Naive thymus-derived CD4-positive, alpha-beta T cell (primary cell): ENCODE measurements at regions of chrX and their contacts with region 1.

Region 1: DNA sequence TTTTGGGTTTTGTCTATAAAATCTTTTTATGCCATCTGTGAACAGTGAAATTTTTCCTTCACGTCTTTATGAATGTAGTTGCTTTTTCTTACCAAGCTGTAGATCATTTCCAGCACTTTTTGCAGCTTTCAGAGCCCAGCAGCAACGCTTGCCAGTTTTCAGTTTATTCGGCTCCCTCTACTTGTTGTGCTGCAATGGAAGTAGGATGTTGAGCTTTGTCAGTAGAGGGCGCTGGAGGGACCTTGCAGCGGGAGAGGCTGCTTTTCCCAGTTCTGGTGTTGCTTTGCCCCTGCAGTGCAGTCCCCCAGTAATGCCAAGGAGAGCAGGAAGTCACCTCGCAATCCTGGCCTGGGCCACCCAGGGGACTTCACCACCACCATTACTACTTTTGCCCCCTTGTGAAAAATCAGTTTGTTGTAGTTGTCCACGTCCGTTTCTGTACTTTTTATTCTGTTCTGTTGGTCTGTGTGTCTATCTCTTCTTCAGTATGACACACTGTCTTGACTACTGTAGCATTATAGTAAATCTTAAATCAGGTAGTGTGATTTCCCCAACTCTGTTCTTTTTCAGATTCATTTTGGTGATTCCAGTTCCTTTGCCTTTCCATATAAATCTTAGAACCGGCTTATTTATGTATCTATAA is 21.8 kb downstream of the CMC4 start:
- DNase-seq: peak in 7 of 9 donors; percentile 28 to 59 (median 52)
- ATAC-seq: peak; percentile 66
- H3K4me3 ChIP-seq: no peak overlapping the region
- H3K4me3 Mint-ChIP-seq: peak overlapping the region in 4 of 10 donors; percentile 4 to 31 (median 11)
- H3K27ac ChIP-seq: peak overlapping the region; percentile 48
- H3K27ac Mint-ChIP-seq: peak overlapping the region in 8 of 9 donors; percentile 41 to 91 (median 78)
- H3K4me1 ChIP-seq: no peaks in the 10 kb centered on the region
- H3K4me1 Mint-ChIP-seq: peaks cover 7 to 63% (median 42%) of the 10 kb centered on the region in 7 donors
- H3K27me3 ChIP-seq: no peaks in the 10 kb centered on the region
- H3K27me3 Mint-ChIP-seq: no peaks in the 10 kb centered on the region

Region 2: GRCh38 chrX:153319295-153320046 is 1729.6 kb before region 1 on chrX:
- CTCF ChIA-PET with region 1: no interaction called
- POLR2A ChIA-PET with region 1: no interaction called
- intact Hi-C with region 1: no loop called
- DNase-seq: no peak
- ATAC-seq: no peak
- H3K4me3 ChIP-seq: no peak overlapping the region
- H3K4me3 Mint-ChIP-seq: no peak overlapping the region
- H3K27ac ChIP-seq: no peak overlapping the region
- H3K27ac Mint-ChIP-seq: no peak overlapping the region
- H3K4me1 ChIP-seq: peaks cover 0 to 7% of the 10 kb centered on the region in 2 donors
- H3K4me1 Mint-ChIP-seq: peaks cover 0 to 10% (median 8%) of the 10 kb centered on the region in 7 donors
- H3K27me3 ChIP-seq: no peaks in the 10 kb centered on the region
- H3K27me3 Mint-ChIP-seq: peaks cover 0 to 26% (median 0%) of the 10 kb centered on the region in 5 donors

Region 3: DNA sequence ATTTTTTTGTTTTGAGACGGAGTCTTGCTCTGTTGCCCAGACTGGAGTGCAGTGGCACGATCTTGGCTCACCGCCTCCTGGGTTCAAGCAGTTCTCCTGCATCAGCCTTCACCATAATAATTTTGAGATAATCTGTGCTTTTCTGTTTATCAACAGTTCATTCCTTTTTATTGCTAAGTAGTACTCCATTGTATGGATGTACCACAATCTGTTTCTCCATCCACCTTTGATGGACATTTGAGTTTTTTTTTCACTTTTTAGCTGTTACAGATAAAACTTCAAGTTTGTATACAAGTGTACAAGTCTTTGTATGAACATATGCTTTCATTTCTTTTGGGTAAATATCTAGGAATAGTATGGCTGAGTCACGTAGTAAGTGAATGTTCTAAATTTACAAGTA is 13.4 kb before region 1 on chrX:
- CTCF ChIA-PET with region 1: no interaction called
- POLR2A ChIA-PET with region 1: no interaction called
- intact Hi-C with region 1: no loop called
- DNase-seq: no peak
- ATAC-seq: no peak
- H3K4me3 ChIP-seq: no peak overlapping the region
- H3K4me3 Mint-ChIP-seq: no peak overlapping the region
- H3K27ac ChIP-seq: no peak overlapping the region
- H3K27ac Mint-ChIP-seq: no peak overlapping the region
- H3K4me1 ChIP-seq: no peaks in the 10 kb centered on the region
- H3K4me1 Mint-ChIP-seq: peaks cover 3 to 44% (median 37%) of the 10 kb centered on the region in 7 donors
- H3K27me3 ChIP-seq: no peaks in the 10 kb centered on the region
- H3K27me3 Mint-ChIP-seq: no peaks in the 10 kb centered on the region

Region 4: DNA sequence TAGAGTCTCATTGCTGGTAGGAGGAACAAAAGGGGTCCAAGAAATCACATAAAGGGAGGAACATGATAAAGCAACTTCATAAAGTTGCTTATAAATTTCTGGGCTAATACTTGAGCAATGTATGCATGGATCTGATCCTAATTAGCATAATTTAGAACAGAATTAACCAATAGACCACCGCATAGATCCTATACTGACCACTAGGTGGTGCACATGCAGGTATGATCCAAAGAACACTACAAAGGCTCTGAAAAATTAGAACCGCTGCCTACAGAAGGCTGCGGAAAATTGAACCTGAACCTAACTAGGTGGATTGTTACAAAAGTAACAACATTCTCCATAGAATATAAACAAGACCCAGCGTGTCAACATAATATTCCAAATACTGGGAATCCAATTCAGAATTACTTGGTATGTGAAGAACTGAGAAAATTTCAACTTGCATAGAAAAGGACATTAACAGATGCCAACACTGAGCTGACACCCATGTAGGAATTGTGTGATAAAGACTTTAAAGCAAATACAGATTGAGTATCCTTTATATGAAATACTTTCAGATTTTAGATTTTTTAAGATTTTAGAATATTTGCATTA is 45.5 kb after region 1 on chrX:
- CTCF ChIA-PET with region 1: no interaction called
- POLR2A ChIA-PET with region 1: no interaction called
- intact Hi-C with region 1: no loop called
- DNase-seq: peak in 7 of 9 donors; percentile 18 to 57 (median 39)
- ATAC-seq: peak; percentile 87
- H3K4me3 ChIP-seq: no peak overlapping the region
- H3K4me3 Mint-ChIP-seq: no peak overlapping the region
- H3K27ac ChIP-seq: no peak overlapping the region
- H3K27ac Mint-ChIP-seq: peak overlapping the region in 1 of 9 donors; percentile 9
- H3K4me1 ChIP-seq: no peaks in the 10 kb centered on the region
- H3K4me1 Mint-ChIP-seq: peaks cover 0 to 5% (median 4%) of the 10 kb centered on the region in 7 donors
- H3K27me3 ChIP-seq: no peaks in the 10 kb centered on the region
- H3K27me3 Mint-ChIP-seq: no peaks in the 10 kb centered on the region

Region 5: DNA sequence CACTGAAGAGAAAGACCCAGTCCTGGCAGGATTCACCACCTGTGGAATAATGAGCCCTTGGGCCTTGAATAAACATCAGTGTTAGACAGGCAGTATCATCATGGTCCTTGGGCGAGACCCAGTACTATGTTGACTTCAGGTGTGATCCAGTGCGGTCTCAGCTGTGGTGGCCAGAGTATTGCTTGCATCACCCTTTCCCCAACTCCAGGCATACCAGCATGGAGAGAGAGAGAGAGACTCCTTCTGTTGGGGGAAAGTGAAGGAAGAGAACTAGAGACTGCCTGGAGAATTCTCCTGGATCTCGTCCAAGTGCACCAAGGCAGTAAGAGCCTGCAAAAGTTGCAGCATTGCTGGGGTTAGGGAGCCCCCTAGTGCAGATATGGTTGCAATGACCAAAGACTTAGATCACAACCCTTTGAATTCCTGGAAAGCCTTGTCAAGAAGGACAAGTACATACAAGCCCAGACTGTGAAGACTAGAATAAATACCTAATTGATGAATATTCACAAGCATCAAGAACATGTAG is 770.9 kb after region 1 on chrX:
- CTCF ChIA-PET with region 1: no interaction called
- POLR2A ChIA-PET with region 1: no interaction called
- intact Hi-C with region 1: loop called in 1 of 2 experiments (anchors 2 kb)
- DNase-seq: peak in 7 of 9 donors; percentile 12 to 50 (median 39)
- ATAC-seq: peak; percentile 64
- H3K4me3 ChIP-seq: no peak overlapping the region
- H3K4me3 Mint-ChIP-seq: no peak overlapping the region
- H3K27ac ChIP-seq: no peak overlapping the region
- H3K27ac Mint-ChIP-seq: no peak overlapping the region
- H3K4me1 ChIP-seq: no peaks in the 10 kb centered on the region
- H3K4me1 Mint-ChIP-seq: peaks cover 0 to 3% (median 0%) of the 10 kb centered on the region in 7 donors
- H3K27me3 ChIP-seq: no peaks in the 10 kb centered on the region
- H3K27me3 Mint-ChIP-seq: peaks cover 8 to 32% (median 12%) of the 10 kb centered on the region in 5 donors